Activated T-helper 1 cell treated with anti-CD3 and anti-CD28 coated beads, Interleukin-12 subunit alpha, Interleukin-12 subunit beta, Interleukin-2, Interleukin-4 antibody, amounts not matched to agents 30 ng/mL and 10 ng/mL and 1 ng/mL, durations not matched to agents 14 hours and 24 hours and 36 hours (primary cell): ENCODE measurements at regions of chr10 and their contacts with region 1.

Region 1: DNA sequence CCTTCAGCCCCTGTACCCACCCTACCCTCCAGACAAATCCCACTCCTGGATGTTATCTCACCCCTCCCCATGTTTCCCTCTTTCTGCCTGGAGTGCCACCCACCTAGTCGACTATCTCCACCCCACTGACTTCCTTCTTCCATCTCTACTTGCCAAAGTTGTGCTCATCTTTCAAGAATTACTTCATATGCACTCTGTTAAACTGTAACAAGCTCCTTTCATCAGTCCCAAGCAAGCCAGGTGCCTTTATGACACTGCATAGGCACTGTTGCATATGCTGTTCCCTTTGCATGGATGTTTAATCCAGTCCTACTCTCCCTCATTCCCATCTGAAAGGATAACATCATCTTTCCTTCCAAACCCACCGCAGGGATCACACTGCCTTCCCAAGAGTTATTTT is 8.9 kb upstream of the CDK1 start:
- DNase-seq: no peak
- H3K4me3 Mint-ChIP-seq: no peak overlapping the region
- H3K27ac Mint-ChIP-seq: no peak overlapping the region
- H3K4me1 Mint-ChIP-seq: peaks cover 20% of the 10 kb centered on the region
- H3K27me3 Mint-ChIP-seq: peaks cover 2% of the 10 kb centered on the region

Region 2: DNA sequence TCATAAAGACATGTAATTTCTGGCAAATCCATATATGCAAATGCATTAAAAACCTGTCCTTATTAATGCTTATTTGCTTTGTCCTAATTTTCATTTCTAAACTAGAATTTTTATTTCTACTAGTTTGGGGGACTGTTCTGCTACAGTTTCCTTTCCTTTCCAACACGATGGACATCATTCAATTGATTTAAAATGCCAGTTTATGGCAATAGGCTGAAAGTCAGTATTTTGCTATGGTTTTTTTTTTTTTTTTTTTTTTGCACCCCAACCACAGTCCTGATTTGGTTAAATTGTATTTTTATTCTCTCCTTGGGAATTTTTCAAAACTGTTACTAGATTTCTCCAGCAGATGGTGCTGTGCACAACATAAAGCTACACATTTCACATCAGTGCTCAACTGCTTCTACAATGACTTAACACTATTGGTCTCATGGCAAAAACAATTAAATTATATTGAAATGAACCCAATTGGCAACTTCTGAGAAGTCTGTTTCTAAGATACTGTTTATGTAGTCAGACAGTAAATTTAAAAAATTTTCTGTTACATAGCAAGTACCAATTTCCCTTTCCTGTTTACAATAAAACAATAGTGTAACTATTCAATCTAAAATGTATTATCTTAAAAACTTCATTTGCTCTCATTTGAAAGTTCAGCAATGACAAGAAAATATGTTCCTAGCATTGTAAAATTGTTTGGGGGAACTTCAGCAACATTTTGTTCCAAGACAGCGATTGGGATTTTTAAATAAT is 669.2 kb before region 1 on chr10:
- intact Hi-C with region 1: loop called (anchors 5 kb)
- DNase-seq: no peak
- H3K4me3 Mint-ChIP-seq: no peak overlapping the region
- H3K27ac Mint-ChIP-seq: no peak overlapping the region
- H3K4me1 Mint-ChIP-seq: no peaks in the 10 kb centered on the region
- H3K27me3 Mint-ChIP-seq: no peaks in the 10 kb centered on the region

Region 3: GRCh38 chr10:60444494-60445064 is 324.8 kb before region 1 on chr10:
- intact Hi-C with region 1: loop called (anchors 2 kb)
- DNase-seq: no peak
- H3K4me3 Mint-ChIP-seq: no peak overlapping the region
- H3K27ac Mint-ChIP-seq: no peak overlapping the region
- H3K4me1 Mint-ChIP-seq: peaks cover 16% of the 10 kb centered on the region
- H3K27me3 Mint-ChIP-seq: peaks cover 2% of the 10 kb centered on the region

Region 4: DNA sequence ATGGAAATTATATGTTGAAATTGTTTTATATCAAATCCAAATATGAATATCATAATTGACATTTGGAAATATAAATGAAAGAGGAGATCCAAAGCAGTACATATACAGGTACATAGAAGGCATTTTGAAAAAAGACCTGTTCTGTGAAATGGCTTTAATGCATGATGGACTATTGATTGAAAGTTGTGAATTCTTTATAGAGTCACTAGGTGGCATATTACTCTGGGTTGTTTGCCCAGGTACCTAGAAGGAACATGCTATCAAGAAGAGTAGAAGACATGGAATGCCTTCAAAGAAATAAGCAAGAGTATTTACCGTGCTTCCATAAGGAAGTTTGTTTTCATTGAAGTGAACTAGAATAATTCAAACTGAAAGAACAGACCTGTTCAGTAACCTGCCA is 219.7 kb before region 1 on chr10:
- intact Hi-C with region 1: loop called (anchors 1 kb)
- DNase-seq: no peak
- H3K4me3 Mint-ChIP-seq: no peak overlapping the region
- H3K27ac Mint-ChIP-seq: no peak overlapping the region
- H3K4me1 Mint-ChIP-seq: no peaks in the 10 kb centered on the region
- H3K27me3 Mint-ChIP-seq: no peaks in the 10 kb centered on the region

Region 5: GRCh38 chr10:60662917-60663614 is 106.3 kb before region 1 on chr10:
- intact Hi-C with region 1: loop called (anchors 5 kb)
- DNase-seq: no peak
- H3K4me3 Mint-ChIP-seq: no peak overlapping the region
- H3K27ac Mint-ChIP-seq: no peak overlapping the region
- H3K4me1 Mint-ChIP-seq: peaks cover 32% of the 10 kb centered on the region
- H3K27me3 Mint-ChIP-seq: no peaks in the 10 kb centered on the region